CD4-positive, alpha-beta T cell (primary cell): ENCODE measurements at regions of chr22 and their contacts with region 1.

Region 1: DNA sequence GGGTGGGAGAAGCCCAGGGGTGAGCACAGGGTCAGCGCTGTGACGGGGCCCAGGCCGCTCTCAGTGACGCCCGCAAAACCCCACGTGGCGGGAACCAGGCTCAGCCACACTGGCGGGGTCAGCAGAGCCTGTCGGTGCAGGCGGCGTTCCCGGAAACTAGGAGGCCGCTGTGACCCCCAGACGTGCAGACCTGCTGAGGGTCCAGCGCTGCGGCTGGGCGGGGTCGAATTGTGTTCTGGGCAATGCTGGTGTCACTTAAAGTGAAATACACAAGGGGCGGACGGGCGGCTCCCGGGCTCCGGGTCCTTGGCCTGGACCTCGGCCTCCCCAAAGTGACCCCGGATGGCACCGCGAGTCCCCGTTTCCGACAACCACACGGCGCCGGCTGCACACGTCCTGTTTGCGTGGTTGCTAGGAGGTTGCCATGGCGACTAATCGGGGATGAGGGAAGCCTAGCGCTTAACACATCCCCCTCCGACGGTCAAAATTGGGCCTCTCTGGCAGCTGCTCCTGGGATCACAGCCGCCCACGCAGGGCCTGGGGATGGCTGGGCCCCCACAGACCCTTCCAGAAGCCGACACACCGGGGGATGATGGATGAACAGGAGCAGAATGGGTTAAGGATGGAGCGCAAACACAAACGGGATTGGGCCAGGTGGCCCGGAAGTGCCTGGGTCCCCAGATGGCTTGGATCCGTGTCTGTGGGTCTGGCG is 81.7 kb upstream of the PRR5 start:
- DNase-seq: peak; percentile 73 to 96 (median 82)
- ATAC-seq: peak; percentile 83
- H3K4me3 ChIP-seq: peak overlapping the region; percentile 44
- H3K4me3 Mint-ChIP-seq: no peak overlapping the region
- H3K27ac ChIP-seq: no peak overlapping the region
- H3K27ac Mint-ChIP-seq: no peak overlapping the region
- H3K4me1 ChIP-seq: peaks cover 42% of the 10 kb centered on the region
- H3K4me1 Mint-ChIP-seq: no peaks in the 10 kb centered on the region
- H3K27me3 ChIP-seq: no peaks in the 10 kb centered on the region
- H3K27me3 Mint-ChIP-seq: no peaks in the 10 kb centered on the region
- CTCF ChIP-seq: no peak

Region 2: GRCh38 chr22:44380756-44381470 is 239.4 kb before region 1 on chr22:
- CTCF ChIA-PET with region 1: no interaction called
- POLR2A ChIA-PET with region 1: no interaction called
- intact Hi-C with region 1: no loop called
- DNase-seq: no peak
- ATAC-seq: no peak
- H3K4me3 ChIP-seq: no peak overlapping the region
- H3K4me3 Mint-ChIP-seq: no peak overlapping the region
- H3K27ac ChIP-seq: no peak overlapping the region
- H3K27ac Mint-ChIP-seq: no peak overlapping the region
- H3K4me1 ChIP-seq: no peaks in the 10 kb centered on the region
- H3K4me1 Mint-ChIP-seq: no peaks in the 10 kb centered on the region
- H3K27me3 ChIP-seq: no peaks in the 10 kb centered on the region
- H3K27me3 Mint-ChIP-seq: peaks cover 4% of the 10 kb centered on the region
- CTCF ChIP-seq: no peak

Region 3: GRCh38 chr22:44455151-44455962 is 164.9 kb before region 1 on chr22:
- CTCF ChIA-PET with region 1: no interaction called
- POLR2A ChIA-PET with region 1: no interaction called
- intact Hi-C with region 1: loop called in 1 of 2 experiments (anchors 1 kb)
- DNase-seq: peak in 13 of 14 experiments; percentile 41 to 91 (median 60)
- ATAC-seq: peak; percentile 77
- H3K4me3 ChIP-seq: no peak overlapping the region
- H3K4me3 Mint-ChIP-seq: peak overlapping the region; percentile 47
- H3K27ac ChIP-seq: peak overlapping the region; percentile 44 to 69
- H3K27ac Mint-ChIP-seq: peak overlapping the region; percentile 94
- H3K4me1 ChIP-seq: peaks cover 66% of the 10 kb centered on the region
- H3K4me1 Mint-ChIP-seq: peaks cover 26% of the 10 kb centered on the region
- H3K27me3 ChIP-seq: no peaks in the 10 kb centered on the region
- H3K27me3 Mint-ChIP-seq: no peaks in the 10 kb centered on the region
- CTCF ChIP-seq: no peak

Region 4: GRCh38 chr22:44658311-44658953 is 38.1 kb after region 1 on chr22:
- CTCF ChIA-PET with region 1: no interaction called
- POLR2A ChIA-PET with region 1: no interaction called
- intact Hi-C with region 1: no loop called
- DNase-seq: peak in 1 of 14 experiments; percentile 13
- ATAC-seq: no peak
- H3K4me3 ChIP-seq: no peak overlapping the region
- H3K4me3 Mint-ChIP-seq: no peak overlapping the region
- H3K27ac ChIP-seq: no peak overlapping the region
- H3K27ac Mint-ChIP-seq: no peak overlapping the region
- H3K4me1 ChIP-seq: peaks cover 22% of the 10 kb centered on the region
- H3K4me1 Mint-ChIP-seq: peaks cover 3% of the 10 kb centered on the region
- H3K27me3 ChIP-seq: no peaks in the 10 kb centered on the region
- H3K27me3 Mint-ChIP-seq: no peaks in the 10 kb centered on the region
- CTCF ChIP-seq: no peak

Region 5: DNA sequence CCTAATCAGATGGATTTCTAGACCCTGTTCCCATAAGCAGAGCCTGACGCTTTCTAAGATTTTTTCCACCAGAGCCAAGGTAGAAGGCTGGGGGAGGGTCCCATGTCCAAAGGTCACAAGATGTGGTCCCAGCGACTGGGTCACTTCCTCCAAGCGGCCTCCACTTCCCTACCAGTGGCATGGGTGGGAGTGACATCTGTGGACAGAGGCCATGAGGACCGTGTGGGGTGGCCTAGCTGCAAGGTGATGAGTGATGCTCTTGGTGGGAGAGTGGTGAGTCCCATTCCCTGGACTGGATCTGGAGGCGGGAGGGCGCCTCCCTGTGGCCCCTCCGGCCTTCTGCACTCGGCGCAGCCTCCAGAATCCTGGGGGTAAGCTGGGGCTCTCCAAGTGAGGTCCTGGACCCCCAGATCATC is 49.3 kb after region 1 on chr22:
- CTCF ChIA-PET with region 1: no interaction called
- POLR2A ChIA-PET with region 1: no interaction called
- intact Hi-C with region 1: loop called in 1 of 2 experiments (anchors 2 kb)
- DNase-seq: peak in 2 of 14 experiments; percentile 29 to 47
- ATAC-seq: no peak
- H3K4me3 ChIP-seq: peak overlapping the region; percentile 69
- H3K4me3 Mint-ChIP-seq: peak overlapping the region; percentile 84
- H3K27ac ChIP-seq: no peak overlapping the region
- H3K27ac Mint-ChIP-seq: peak overlapping the region; percentile 57
- H3K4me1 ChIP-seq: peaks cover 71% of the 10 kb centered on the region
- H3K4me1 Mint-ChIP-seq: peaks cover 59% of the 10 kb centered on the region
- H3K27me3 ChIP-seq: no peaks in the 10 kb centered on the region
- H3K27me3 Mint-ChIP-seq: no peaks in the 10 kb centered on the region
- CTCF ChIP-seq: no peak